Activated B cell treated with CpG ODN at 0.5 μM for 24 hours (primary cell): ENCODE measurements at regions of chr13 and their contacts with region 1.

Region 1: DNA sequence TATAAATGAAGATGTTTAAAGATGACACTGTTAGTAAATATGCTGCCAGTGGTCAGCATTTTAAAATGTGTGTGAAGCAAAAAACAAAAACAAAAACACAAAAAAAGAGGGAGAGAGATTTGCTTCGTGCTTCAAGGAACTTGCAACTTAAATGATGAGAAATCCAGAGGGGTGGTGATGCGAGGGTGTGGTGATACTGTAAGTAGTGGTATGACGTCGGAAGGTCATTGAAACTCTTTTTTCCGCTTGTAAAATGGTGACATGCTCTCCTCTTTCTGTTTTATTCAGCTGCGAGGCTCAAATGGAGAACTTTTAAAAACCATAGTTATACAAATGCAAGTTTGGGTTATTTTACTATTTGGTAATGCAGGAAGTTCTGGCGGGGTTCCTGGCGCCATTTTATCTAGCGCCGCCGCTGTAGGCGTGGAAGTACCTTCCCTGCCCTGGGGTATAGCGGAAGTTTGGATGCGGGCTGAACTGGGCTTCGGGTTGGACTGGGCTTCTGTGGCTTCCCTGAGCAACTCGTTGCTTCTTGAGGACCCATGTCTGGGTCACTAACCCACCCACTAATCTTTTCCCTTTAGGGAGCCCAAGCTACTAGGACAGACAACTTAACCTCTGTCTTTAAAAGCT is 34.8 kb downstream of the DGKH start:
- DNase-seq: no peak
- ATAC-seq: no peak
- H3K4me3 Mint-ChIP-seq: peak overlapping the region; percentile 3
- H3K27ac Mint-ChIP-seq: no peak overlapping the region
- H3K4me1 Mint-ChIP-seq: no peaks in the 10 kb centered on the region
- H3K27me3 Mint-ChIP-seq: no peaks in the 10 kb centered on the region
- CTCF ChIP-seq: no peak

Region 2: DNA sequence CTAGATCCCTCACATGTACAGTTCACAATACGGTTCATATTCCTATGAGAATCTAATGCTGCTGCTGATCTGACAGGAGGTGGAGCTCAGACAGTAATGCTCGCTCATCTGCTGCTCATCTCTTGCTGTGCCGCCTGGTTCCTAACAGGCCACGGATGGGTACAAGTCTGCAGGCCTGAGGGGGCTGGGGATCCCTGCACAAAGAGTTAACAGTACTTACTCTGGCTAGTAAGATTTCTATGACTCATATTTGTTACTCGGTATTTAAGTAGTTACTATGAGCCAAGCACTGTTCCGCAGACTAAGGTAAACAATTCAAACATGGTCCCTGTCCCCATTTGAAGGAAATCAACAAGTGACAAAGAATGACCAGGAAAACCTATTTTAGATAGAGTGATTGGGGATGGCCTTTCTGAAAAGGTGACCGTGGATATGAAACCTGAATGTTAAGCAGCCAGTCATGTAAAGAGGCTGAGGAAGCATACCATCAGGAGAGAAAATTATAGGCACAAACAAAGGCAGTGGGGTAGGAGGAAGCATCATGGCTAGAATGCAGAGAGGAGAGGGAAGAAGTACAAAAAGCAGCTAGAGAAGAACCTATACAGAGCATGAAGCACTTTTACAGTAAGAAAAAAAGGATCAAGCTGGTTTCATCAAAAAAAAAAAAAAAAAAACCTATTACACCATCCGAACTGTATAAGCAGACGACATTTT is 1042.5 kb before region 1 on chr13:
- CTCF ChIA-PET with region 1: no interaction called
- POLR2A ChIA-PET with region 1: no interaction called
- intact Hi-C with region 1: no loop called
- DNase-seq: no peak
- ATAC-seq: no peak
- H3K4me3 Mint-ChIP-seq: no peak overlapping the region
- H3K27ac Mint-ChIP-seq: no peak overlapping the region
- H3K4me1 Mint-ChIP-seq: peaks cover 12% of the 10 kb centered on the region
- H3K27me3 Mint-ChIP-seq: no peaks in the 10 kb centered on the region
- CTCF ChIP-seq: no peak

Region 3: GRCh38 chr13:42063105-42063504 is 20.1 kb before region 1 on chr13:
- CTCF ChIA-PET with region 1: no interaction called
- POLR2A ChIA-PET with region 1: no interaction called
- intact Hi-C with region 1: loop called (anchors 2 kb)
- DNase-seq: no peak
- ATAC-seq: no peak
- H3K4me3 Mint-ChIP-seq: no peak overlapping the region
- H3K27ac Mint-ChIP-seq: no peak overlapping the region
- H3K4me1 Mint-ChIP-seq: no peaks in the 10 kb centered on the region
- H3K27me3 Mint-ChIP-seq: no peaks in the 10 kb centered on the region
- CTCF ChIP-seq: no peak